ENCODE measurements at regions of chr2 and their contacts with region 1.

Region 1: GRCh38 chr2:176454893-176455811 is 185.9 kb downstream of the MTX2 start:
- DNase-seq: peak; percentile 71

Region 2: DNA sequence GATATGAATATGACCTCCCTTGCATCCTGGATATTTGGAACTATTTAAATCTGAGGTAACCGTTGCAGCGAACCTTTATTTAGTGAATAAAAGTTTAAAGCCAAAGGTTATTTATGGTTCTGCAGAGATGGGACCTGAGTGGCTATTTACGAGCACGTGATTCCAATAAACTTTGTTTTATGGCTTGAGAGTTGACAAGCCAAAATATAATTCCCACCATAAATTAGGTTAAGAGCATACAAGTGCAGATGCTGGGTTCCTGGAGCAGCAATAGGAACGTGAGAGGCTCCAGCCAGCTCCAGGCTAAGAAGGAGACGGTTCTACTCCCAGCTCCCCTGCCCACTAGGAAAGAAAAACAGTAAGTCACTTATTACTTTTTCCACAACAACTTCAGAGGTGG is 309.1 kb before region 1 on chr2:
- CTCF ChIA-PET with region 1: interaction called, 26 read pairs
- POLR2A ChIA-PET with region 1: interaction called, 5 read pairs
- DNase-seq: peak; percentile 73

Region 3: DNA sequence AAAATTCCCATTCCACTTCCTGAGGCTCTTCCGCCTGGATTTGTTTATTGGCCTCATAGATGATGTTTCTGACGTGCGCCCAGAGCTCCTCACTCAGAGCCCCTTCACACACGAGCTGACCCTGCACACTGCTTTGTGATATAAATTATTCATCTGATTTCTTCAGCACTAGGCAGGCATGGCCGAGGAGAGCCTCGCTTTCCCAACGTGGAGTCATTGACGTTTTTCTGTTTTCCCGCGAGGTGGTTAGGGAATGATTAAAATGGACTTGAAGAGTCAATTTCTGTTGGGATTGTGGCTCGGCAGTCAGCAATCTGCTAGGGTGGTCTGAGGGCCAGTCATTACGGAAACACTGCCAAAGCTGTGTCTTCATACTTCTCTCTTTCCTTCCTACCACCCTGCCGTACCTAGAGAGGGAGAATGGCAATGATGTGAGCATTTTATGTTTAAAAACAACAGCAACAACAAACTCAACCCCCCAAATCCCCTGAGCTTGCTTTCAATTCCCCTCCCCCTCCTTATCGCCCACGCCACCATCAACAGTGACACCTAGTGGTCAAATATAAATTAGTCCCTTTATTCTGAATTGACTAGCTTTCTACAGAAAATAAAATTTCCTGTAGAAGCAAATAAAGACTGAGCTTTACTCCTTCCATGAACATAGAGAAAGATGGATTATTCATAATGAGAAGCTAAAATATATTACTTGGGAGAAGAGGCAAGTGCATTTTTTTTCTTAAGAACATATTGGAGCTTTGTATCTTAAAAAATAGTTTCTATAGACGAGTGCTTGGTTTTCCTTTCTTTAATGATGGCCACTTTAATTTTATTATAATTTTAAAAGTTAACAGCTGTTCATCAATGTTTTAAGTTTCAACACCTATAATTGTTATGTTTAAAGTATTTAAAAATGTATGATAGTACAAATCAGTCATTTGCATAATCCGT is 99.2 kb after region 1 on chr2:
- CTCF ChIA-PET with region 1: interaction called, 15 read pairs
- POLR2A ChIA-PET with region 1: no interaction called
- DNase-seq: peak; percentile 65

Region 4: GRCh38 chr2:176582990-176583481 is 127.9 kb after region 1 on chr2:
- CTCF ChIA-PET with region 1: no interaction called
- POLR2A ChIA-PET with region 1: no interaction called
- DNase-seq: peak; percentile 35